PC-3 (cell line): ENCODE measurements at regions of chr9 and their contacts with region 1.

Region 1: GRCh38 chr9:5945112-5945511 is 54.4 kb downstream of the MLANA start:
- DNase-seq: no peak
- ATAC-seq: no peak
- H3K4me3 ChIP-seq: no peak overlapping the region
- H3K27ac ChIP-seq: no peak overlapping the region
- H3K4me1 ChIP-seq: peaks cover 23% of the 10 kb centered on the region; the same call in 1 of the 2 replicates
- H3K27me3 ChIP-seq: no peaks in the 10 kb centered on the region
- CTCF ChIP-seq: no peak

Region 2: DNA sequence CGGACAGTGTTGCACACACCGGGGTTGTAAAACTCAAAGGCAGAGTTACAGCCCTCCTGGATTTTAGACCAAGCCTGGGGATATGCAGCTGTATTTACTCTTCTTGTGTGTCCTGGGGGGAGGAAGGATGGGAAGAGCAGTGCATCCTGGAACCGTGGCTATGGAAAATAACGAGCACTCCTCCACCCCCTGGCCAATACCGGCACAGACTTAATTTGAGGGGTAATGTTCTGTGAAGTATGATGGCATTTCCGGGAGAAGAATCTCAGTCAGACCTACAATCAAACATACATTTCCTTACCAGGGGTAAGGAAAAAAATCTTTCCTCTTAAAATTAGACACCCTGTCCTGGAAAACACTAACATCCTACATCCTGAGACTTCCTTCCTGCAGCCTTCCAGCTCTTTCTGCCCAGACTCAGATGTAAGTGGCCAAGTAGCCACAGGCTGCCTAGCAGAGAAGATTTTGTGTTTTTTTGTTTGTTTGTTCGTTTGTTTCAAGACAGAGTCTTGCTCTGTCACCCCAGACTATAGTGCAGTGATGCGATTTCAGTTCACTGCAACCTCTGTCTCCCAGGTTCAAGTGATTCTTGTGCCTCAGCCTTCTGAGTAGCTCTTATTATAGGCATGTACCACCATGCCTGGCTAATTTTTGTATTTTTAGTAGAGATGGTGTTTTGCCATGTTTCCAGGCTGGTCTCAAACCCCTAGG is 101.2 kb before region 1 on chr9:
- CTCF ChIA-PET with region 1: no interaction called
- POLR2A ChIA-PET with region 1: no interaction called
- intact Hi-C with region 1: no loop called
- DNase-seq: peak; percentile 66
- ATAC-seq: peak; percentile 65
- H3K4me3 ChIP-seq: peak overlapping the region; percentile 5; the same call in 1 of the 2 replicates
- H3K27ac ChIP-seq: peak overlapping the region; percentile 63
- H3K4me1 ChIP-seq: peaks cover 57% of the 10 kb centered on the region
- H3K27me3 ChIP-seq: no peaks in the 10 kb centered on the region
- CTCF ChIP-seq: no peak

Region 3: GRCh38 chr9:6015278-6016157 is 70.4 kb after region 1 on chr9 and contains the start of gene RANBP6:
- CTCF ChIA-PET with region 1: no interaction called
- POLR2A ChIA-PET with region 1: interaction called, 10 read pairs
- intact Hi-C with region 1: no loop called
- DNase-seq: peak; percentile 77
- ATAC-seq: peak; percentile 89
- H3K4me3 ChIP-seq: peak within 1 kb of the TSS; percentile 94
- H3K27ac ChIP-seq: peak within 1 kb of the TSS; percentile 76
- H3K4me1 ChIP-seq: peaks cover 29% of the 10 kb centered on the region
- H3K27me3 ChIP-seq: no peaks in the 10 kb centered on the region
- CTCF ChIP-seq: no peak
- total RNA-seq, gene RANBP6: 11.6 and 14.1 TPM in 2 replicates